ENCODE measurements at regions of chr5 and their contacts with region 1.

Region 1: DNA sequence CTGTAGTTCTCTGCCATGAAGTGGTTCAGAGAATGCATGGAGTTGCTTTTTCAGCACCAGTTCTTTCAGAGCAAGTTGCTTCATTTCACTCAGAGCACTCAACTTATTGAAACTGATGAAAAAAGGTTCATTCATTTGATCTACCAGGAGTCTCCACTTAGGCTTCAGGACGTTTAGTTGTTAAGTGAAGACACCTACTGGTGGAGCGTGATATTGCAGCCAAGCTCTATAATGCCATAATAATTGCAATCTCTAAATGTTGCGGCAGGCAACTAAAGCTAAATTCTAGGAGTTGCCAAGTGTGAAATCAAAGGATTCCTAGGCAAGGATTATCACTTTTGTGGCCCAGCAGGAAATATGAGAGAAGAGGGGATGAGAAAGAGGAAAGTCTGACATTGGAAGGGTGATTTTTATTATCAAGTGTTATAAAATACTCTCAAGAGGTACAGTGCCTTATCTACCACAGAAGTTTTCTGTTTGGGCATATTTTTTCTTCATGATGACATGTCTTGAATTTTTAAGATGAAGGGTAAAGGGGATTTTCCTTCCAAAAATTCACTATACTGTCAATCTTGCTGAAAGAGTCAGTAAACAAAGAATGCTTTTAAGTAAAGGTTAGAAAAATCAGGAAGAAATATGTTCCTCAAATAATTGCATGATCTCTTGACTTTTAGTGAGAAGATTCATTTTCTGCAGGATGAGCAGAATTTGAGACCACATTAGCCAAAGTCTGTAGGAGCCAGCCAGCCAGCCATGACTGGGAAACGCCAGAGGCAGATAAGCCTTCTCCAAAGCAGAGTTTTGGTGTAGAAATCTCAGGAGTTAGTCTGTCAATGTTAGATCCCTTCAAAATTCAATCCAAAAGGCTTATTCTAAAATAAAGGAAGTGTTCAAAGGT is 83.4 kb downstream of the SH3PXD2B start:
- DNase-seq: peak in 1 of 2 experiments; percentile 62
- H3K4me3 ChIP-seq: no peak overlapping the region
- H3K4me3 Mint-ChIP-seq: no peak overlapping the region
- H3K27ac Mint-ChIP-seq: no peak overlapping the region
- H3K4me1 ChIP-seq: no peaks in the 10 kb centered on the region
- H3K4me1 Mint-ChIP-seq: no peaks in the 10 kb centered on the region
- H3K27me3 ChIP-seq: no peaks in the 10 kb centered on the region
- H3K27me3 Mint-ChIP-seq: no peaks in the 10 kb centered on the region
- CTCF ChIP-seq: peak; percentile 31 to 78

Region 2: DNA sequence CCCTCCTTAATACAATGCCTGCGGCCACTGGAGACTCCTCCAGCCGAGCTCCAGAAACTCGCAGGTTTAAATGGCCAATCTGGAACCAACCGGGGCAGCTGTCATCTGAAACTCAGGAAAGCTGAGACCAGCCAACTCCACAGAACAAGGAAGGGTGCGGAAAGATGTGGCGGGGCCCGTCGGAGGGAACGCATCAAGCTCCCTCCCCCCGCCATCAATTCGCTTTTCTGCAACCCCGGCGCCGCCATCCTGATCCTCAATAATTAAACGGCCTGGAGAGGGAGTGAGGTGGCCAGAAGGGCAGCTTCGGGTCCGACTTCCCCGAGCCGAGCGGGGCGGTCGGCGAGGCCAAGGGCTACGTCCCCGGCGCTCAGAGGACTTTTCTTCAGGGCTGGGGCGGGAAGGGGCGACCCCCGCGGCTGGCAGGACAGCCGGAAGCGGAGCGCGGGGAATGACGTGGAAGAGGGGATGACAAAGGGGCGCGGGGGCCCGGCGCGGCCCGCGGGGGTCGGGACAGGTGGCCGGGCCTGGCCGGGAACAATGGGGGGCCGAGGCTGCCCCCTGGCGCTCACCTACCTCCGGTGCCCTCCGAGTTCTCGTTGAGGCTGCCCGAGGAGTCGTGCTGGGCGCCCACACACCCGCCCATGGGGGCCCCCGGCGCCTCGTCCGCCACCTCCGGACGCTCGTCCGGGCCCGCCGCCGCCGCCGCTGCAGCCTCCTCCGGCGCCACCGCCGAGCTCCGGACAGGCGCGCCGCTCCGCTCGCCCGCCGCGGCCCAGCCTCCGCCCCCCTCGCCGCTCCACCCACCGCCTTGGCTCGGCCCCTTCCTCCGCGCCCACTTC is 87.7 kb before region 1 on chr5 and contains the start of gene UBTD2:
- CTCF ChIA-PET with region 1: no interaction called
- POLR2A ChIA-PET with region 1: no interaction called
- intact Hi-C with region 1: loop called (anchors 5 kb)
- DNase-seq: peak; percentile 84 to 90
- H3K4me3 ChIP-seq: peak within 1 kb of the TSS; percentile 84
- H3K4me3 Mint-ChIP-seq: peak within 1 kb of the TSS; percentile 86
- H3K27ac Mint-ChIP-seq: peak within 1 kb of the TSS; percentile 85
- H3K4me1 ChIP-seq: peaks cover 5% of the 10 kb centered on the region; the same call in 1 of the 2 replicates
- H3K4me1 Mint-ChIP-seq: peaks cover 9% of the 10 kb centered on the region
- H3K27me3 ChIP-seq: no peaks in the 10 kb centered on the region
- H3K27me3 Mint-ChIP-seq: no peaks in the 10 kb centered on the region
- CTCF ChIP-seq: peak; percentile 42 to 78
- total RNA-seq, gene UBTD2: 32.4 and 33.2 TPM in 2 replicates